H1 (cell line): ENCODE measurements at regions of chr11 and their contacts with region 1.

Region 1: DNA sequence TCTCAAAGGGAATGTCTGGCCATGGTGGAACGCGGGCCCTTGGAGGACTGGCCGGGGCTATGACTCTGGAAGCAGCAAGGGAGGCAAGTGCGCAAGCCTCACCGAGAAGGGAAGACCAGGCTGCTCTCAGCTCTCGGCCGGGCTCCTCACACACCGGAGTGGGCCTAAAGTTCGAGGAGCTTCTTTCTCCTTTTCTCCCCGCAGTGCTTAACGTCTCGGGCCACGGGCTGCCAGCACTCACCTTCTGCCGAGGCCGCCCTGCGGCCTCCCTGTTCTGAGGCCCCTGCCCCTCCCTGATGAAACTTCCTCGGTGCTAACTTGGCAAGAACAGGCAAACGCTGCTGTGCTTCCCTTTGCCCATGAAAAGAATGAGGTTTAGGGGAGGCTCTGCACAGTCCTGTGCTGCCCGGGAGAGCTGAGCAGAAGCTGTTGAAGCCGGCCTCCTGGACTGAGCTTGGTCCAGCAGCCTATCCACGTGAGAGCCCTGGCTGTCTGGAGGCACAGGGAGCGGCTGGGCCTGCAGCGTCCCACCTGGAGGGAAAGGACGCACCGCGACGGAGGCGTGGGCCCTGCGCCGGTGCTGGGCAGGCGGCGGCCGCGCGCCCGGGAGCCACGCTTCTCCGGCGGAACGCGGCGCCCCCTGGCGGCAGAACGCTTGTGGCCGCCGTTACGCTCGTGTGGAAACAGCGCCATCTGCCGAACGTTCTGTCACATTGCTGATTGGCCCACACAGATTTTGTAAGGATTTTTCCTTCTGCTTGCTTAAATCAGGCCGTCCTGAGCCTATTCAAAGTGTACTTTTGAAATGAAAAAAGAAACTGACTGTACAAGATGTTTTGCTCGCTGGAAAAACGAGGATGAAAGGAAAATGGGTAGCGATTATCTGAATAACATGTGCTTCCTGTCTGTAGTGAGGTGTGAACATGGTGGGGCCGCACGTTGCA is 65.0 kb upstream of the TMEM45B start:
- DNase-seq: peak; percentile 23 to 93
- H3K4me3 ChIP-seq: peak overlapping the region in 3 of 4 experiments; percentile 11 to 51 (median 32); a peak in 6 of 8 replicates
- H3K27ac ChIP-seq: no peak overlapping the region
- H3K4me1 ChIP-seq: peaks cover 0 to 1% (median 0%) of the 10 kb centered on the region in 4 experiments; a peak in 1 of 7 replicates
- H3K27me3 ChIP-seq: peaks cover 0 to 13% (median 3%) of the 10 kb centered on the region in 4 experiments; a peak in 2 of 7 replicates
- CTCF ChIP-seq: peak; percentile 92 to 99 (median 97)
- EP300 ChIP-seq: no peak
- POLR2A ChIP-seq: no peak
- RAD21 ChIP-seq: peak; percentile 92 to 93

Region 2: GRCh38 chr11:129364143-129364654 is 386.4 kb before region 1 on chr11:
- CTCF ChIA-PET with region 1: interaction called, 21 read pairs
- POLR2A ChIA-PET with region 1: no interaction called
- DNase-seq: peak; percentile 90 to 91
- H3K4me3 ChIP-seq: no peak overlapping the region
- H3K27ac ChIP-seq: no peak overlapping the region
- H3K4me1 ChIP-seq: no peaks in the 10 kb centered on the region
- H3K27me3 ChIP-seq: peaks cover 0 to 6% (median 2%) of the 10 kb centered on the region in 4 experiments; a peak in 5 of 7 replicates
- CTCF ChIP-seq: peak; percentile 100
- EP300 ChIP-seq: no peak; a peak in 1 of 3 replicates
- POLR2A ChIP-seq: no peak
- RAD21 ChIP-seq: peak; percentile 100

Region 3: DNA sequence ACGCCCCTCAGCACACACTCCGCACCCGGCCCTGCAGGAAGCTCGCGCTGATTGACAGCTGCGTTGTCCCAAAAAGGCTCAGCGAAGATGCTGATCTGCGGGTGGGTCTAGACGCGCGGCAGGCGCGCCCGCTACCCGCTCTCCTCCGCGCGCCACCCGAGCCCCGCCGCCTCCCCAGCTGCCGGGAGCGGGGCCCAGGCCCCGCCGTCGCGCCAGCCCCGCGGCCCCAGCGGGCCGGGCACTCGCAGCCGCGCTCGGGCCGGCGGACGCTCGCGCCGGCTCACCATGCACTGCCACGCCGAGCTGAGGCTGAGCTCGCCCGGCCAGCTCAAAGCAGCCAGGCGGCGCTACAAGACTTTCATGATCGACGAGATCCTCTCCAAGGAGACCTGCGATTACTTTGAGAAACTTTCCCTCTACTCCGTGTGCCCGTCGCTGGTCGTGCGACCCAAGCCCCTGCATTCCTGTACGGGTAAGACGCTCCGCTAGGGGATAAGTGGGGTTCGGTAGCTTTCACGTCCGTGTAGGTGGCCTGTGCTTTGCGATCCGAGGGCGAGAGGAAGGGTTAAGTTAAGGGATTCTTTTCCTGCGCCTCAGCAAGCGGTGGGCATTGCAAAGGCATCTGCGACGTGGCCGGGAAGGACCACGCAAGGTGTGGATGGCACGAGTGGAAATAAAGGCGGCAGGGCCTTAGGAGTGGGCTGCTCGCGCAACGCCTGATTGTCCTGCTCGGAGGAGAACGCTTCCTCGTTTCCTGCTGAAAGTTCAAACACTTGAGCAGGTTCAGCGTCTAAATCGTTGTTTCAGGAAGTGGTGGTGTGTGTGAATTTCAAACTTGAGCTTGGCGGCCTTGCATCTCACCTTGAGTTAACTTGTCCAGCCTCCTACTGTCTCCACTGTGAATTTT is 374.6 kb before region 1 on chr11 and contains the start of gene BARX2:
- CTCF ChIA-PET with region 1: interaction called, 42 read pairs
- POLR2A ChIA-PET with region 1: no interaction called
- DNase-seq: peak in 1 of 2 experiments; percentile 77
- H3K4me3 ChIP-seq: peak within 1 kb of the TSS; percentile 39 to 61 (median 48)
- H3K27ac ChIP-seq: no peak within 1 kb of the TSS
- H3K4me1 ChIP-seq: peaks cover 0 to 8% (median 6%) of the 10 kb centered on the region in 4 experiments; a peak in 6 of 7 replicates
- H3K27me3 ChIP-seq: peaks cover 45 to 66% (median 63%) of the 10 kb centered on the region in 4 experiments
- CTCF ChIP-seq: peak; percentile 73 to 88 (median 73)
- EP300 ChIP-seq: no peak
- POLR2A ChIP-seq: no peak
- RAD21 ChIP-seq: peak; percentile 80 to 86
- total RNA-seq, gene BARX2: not detected in 2 replicates

Region 4: GRCh38 chr11:129610125-129610524 is 140.5 kb before region 1 on chr11:
- CTCF ChIA-PET with region 1: no interaction called
- POLR2A ChIA-PET with region 1: no interaction called
- DNase-seq: no peak
- H3K4me3 ChIP-seq: no peak overlapping the region
- H3K27ac ChIP-seq: no peak overlapping the region
- H3K4me1 ChIP-seq: no peaks in the 10 kb centered on the region
- H3K27me3 ChIP-seq: no peaks in the 10 kb centered on the region
- CTCF ChIP-seq: no peak
- EP300 ChIP-seq: no peak
- POLR2A ChIP-seq: no peak
- RAD21 ChIP-seq: no peak

Region 5: DNA sequence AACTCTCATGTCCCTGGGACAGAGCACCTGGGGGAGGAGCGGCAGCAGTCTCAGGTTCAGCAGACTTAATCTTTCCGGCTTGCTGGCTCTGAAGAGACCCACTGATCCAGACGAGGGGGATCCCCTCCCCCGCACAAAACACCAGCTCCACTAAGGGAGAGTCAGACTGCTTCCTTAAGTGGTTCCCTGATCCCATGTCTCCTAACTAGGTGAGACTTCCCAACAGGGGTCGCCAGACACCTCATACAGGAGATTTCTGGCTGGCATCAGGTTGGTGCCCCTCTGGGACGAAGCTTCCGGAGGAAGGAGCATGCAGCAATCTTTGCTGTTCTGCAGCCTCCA is 92.1 kb before region 1 on chr11:
- CTCF ChIA-PET with region 1: interaction called, 12 read pairs
- POLR2A ChIA-PET with region 1: no interaction called
- DNase-seq: peak; percentile 21 to 61
- H3K4me3 ChIP-seq: no peak overlapping the region
- H3K27ac ChIP-seq: no peak overlapping the region
- H3K4me1 ChIP-seq: peaks cover 0 to 3% (median 3%) of the 10 kb centered on the region in 4 experiments; a peak in 4 of 7 replicates
- H3K27me3 ChIP-seq: no peaks in the 10 kb centered on the region
- CTCF ChIP-seq: peak; percentile 35 to 46 (median 37)
- EP300 ChIP-seq: no peak
- POLR2A ChIP-seq: no peak
- RAD21 ChIP-seq: peak; percentile 38 to 57

Region 6: DNA sequence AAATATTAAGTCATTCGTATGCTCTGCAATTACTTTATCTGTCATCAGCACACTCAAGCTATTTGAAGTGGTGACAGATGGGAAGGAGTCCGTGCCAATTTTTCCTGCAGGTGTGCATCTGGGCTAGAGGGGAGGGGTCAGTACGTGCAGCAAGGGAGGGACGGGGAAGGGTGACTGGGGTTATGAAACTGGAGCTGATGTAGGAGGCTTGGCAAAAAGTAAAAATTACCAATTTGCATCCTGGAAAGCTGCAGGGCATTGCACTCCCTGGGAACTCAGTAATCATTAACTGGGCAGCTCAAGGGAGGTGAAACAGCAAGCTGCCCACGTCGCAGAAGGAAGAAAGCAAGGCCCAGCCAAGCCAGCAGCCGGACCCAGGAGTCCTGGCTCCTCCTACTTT is 22.0 kb before region 1 on chr11:
- CTCF ChIA-PET with region 1: interaction called, 10 read pairs
- POLR2A ChIA-PET with region 1: no interaction called
- DNase-seq: no peak
- H3K4me3 ChIP-seq: no peak overlapping the region
- H3K27ac ChIP-seq: no peak overlapping the region
- H3K4me1 ChIP-seq: no peaks in the 10 kb centered on the region
- H3K27me3 ChIP-seq: no peaks in the 10 kb centered on the region
- CTCF ChIP-seq: no peak
- EP300 ChIP-seq: no peak
- POLR2A ChIP-seq: no peak
- RAD21 ChIP-seq: no peak

Region 7: GRCh38 chr11:129766898-129767604 is 16.4 kb after region 1 on chr11:
- CTCF ChIA-PET with region 1: interaction called, 16 read pairs
- POLR2A ChIA-PET with region 1: no interaction called
- DNase-seq: peak; percentile 38 to 67
- H3K4me3 ChIP-seq: no peak overlapping the region
- H3K27ac ChIP-seq: no peak overlapping the region
- H3K4me1 ChIP-seq: peaks cover 0 to 4% (median 0%) of the 10 kb centered on the region in 4 experiments; a peak in 2 of 7 replicates
- H3K27me3 ChIP-seq: no peaks in the 10 kb centered on the region
- CTCF ChIP-seq: peak; percentile 68 to 78 (median 68)
- EP300 ChIP-seq: no peak
- POLR2A ChIP-seq: no peak
- RAD21 ChIP-seq: peak; percentile 68 to 75

Region 8: GRCh38 chr11:129785383-129786111 is 34.9 kb after region 1 on chr11:
- CTCF ChIA-PET with region 1: no interaction called
- POLR2A ChIA-PET with region 1: no interaction called
- DNase-seq: no peak
- H3K4me3 ChIP-seq: no peak overlapping the region
- H3K27ac ChIP-seq: no peak overlapping the region
- H3K4me1 ChIP-seq: no peaks in the 10 kb centered on the region
- H3K27me3 ChIP-seq: no peaks in the 10 kb centered on the region
- CTCF ChIP-seq: peak in 1 of 3 experiments; percentile 24; a peak in 1 of 4 replicates
- EP300 ChIP-seq: no peak
- POLR2A ChIP-seq: no peak
- RAD21 ChIP-seq: peak; percentile 38 to 63